ENCODE measurements at regions of chr15 and their contacts with region 1.

Region 1: DNA sequence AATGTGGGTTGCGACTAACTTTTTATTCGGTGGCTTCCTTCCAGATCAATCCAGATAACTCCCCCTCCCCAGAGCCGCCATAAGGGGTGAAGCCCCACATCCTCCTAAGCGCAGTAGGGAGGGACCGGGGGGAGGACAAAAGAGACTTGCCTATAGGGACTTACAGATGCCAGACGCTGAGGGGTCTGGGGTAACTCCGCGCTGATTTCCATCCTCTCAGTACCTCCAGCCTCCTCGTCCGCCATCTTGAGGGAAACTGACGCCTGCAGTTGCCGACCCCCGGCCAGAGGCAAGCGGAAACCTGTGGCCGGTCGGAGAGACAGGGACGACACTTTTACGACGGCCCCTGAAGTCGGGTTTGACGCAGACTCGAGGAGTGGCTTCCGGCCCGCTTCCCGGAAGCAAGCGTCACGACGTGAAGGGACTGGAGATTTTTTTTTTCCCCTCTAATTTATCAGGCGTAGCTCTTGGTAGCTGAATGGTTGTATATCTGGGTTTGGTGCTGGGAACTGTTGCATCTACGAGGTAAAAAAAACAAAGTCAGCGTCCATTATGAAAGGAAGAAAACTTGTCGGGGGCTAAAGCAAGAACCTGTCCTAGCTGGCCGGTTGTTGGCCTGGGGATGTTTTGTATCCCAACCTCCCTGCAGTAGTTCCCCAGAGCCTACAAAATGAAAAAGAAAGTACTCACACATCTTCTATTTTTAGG is at the start of gene UBR1:
- DNase-seq: peak; percentile 78
- ATAC-seq: peak; percentile 94
- H3K4me3 Mint-ChIP-seq: peak within 1 kb of the TSS; percentile 98
- H3K27ac Mint-ChIP-seq: peak within 1 kb of the TSS; percentile 98
- H3K4me1 Mint-ChIP-seq: peaks cover 46% of the 10 kb centered on the region
- H3K27me3 Mint-ChIP-seq: no peaks in the 10 kb centered on the region
- CTCF ChIP-seq: no peak
- total RNA-seq, gene UBR1: 46.6 and 48.9 TPM in 2 replicates

Region 2: DNA sequence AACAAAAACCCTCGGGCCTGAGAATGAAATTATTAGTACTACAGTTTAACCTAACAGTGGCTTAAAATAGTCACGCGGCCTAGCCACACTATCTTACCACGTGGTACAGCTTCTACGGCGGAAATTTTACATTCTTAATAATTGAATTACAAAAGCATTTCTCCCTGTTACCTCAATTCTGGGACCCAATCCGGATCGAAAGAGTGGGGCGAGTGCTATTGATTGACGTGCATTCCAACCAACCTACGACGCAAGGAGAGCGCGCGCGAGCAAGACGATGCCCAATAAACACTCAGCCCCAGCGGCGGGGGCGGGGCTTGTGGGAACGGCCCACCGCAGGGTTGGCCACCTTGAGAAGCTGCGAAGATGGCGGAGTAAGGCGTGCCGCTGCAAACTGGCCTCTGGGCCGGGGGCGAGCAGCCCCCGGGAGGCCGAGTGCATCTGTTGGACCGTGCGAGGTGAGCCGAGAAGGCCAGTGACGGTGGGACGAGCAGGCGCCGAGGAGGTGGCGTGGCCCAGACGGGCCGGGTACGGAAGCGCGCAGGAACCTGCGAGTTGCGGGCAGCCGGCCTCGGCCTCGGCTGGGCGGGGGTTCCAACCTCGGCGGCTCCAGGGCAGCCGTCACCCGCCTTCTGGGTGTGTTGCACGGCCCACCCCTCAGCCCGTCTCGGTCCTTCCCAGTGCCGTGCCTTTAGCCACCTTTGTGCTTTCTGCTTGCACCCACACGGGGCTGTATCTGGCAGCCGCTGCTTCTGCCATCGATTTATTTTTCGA is 1822.1 kb before region 1 on chr15:
- CTCF ChIA-PET with region 1: no interaction called
- POLR2A ChIA-PET with region 1: no interaction called
- intact Hi-C with region 1: loop called (anchors 5 kb)
- DNase-seq: peak; percentile 94
- ATAC-seq: peak; percentile 98
- H3K4me3 Mint-ChIP-seq: peak overlapping the region; percentile 93
- H3K27ac Mint-ChIP-seq: peak overlapping the region; percentile 94
- H3K4me1 Mint-ChIP-seq: peaks cover 42% of the 10 kb centered on the region
- H3K27me3 Mint-ChIP-seq: no peaks in the 10 kb centered on the region
- CTCF ChIP-seq: no peak

Region 3: DNA sequence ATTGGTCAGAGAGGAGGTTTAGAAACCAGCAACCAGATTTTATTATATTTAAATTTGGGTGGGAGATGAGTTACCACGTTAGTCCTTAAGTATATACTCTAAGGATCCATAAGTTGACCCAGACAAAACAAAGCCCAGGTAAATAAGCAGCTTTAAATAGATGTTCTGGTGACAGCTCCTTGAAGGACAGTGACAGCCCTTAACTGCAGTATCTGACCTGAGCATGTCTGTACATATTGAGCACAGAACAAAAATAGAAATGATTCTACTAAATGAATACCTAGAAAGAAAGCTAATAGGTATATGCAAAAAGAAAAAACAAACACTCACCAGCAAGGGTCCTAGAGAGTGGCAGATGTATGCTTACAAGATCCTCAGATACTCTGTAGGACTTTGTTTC is 63.0 kb before region 1 on chr15:
- CTCF ChIA-PET with region 1: no interaction called
- POLR2A ChIA-PET with region 1: no interaction called
- intact Hi-C with region 1: no loop called
- DNase-seq: no peak
- ATAC-seq: no peak
- H3K4me3 Mint-ChIP-seq: no peak overlapping the region
- H3K27ac Mint-ChIP-seq: no peak overlapping the region
- H3K4me1 Mint-ChIP-seq: peaks cover 2% of the 10 kb centered on the region
- H3K27me3 Mint-ChIP-seq: no peaks in the 10 kb centered on the region
- CTCF ChIP-seq: no peak

Region 4: DNA sequence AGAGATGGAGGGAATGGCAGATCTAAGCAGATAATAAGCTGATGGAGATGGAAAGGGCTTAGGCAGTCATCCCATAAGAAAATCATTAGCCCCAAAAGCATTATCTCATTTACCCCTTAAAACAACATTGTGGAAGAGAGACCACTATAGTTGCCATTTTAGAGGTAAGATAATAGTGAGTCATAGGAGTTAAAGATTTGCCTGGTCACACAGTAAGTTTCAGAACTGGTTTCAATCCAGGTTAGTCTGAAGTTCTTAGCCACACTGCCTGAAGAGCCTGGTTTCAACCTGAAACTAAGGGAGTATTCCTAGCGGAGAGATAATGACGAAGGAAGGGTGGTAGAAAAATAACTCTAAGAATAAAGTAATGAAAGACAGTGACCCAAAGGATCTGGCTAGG is 12.9 kb after region 1 on chr15:
- CTCF ChIA-PET with region 1: interaction called, 5 read pairs
- POLR2A ChIA-PET with region 1: interaction called, 12 read pairs
- intact Hi-C with region 1: loop called (anchors 1 kb)
- DNase-seq: no peak
- ATAC-seq: peak; percentile 42
- H3K4me3 Mint-ChIP-seq: peak overlapping the region; percentile 7
- H3K27ac Mint-ChIP-seq: peak overlapping the region; percentile 92
- H3K4me1 Mint-ChIP-seq: peaks cover 39% of the 10 kb centered on the region
- H3K27me3 Mint-ChIP-seq: no peaks in the 10 kb centered on the region
- CTCF ChIP-seq: no peak

Region 5: DNA sequence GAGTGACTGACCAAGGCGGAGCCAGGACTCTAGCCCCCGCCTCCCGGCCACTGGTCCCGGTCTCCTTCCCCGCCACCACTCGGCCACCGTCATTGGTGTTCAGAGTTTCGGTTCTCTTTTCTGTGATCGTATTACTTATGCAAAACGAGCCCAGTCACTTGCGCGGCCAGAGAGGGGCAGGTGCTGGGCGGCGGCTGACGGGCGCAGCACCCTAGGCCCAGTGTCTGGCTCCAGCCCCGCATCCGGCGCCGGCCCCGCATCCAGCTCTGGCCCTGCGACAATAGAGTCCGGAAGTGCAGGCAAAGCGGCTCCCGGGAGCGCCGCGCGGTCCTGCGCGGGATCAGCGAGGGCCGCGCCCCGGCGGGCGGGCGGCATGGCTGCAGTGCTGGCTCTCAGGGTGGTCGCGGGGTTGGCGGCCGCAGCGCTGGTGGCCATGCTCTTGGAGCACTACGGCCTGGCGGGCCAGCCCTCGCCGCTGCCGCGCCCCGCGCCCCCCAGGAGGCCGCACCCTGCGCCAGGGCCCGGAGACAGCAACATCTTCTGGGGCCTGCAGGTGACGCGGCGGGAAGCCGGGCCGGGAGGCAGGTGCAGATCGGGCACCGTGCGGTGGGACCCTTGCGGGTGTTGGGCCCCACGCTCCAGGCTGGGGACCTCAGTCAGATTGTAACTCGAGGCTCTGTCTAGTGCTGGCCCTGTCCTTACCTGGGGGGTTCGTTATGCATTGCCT is 27.7 kb after region 1 on chr15 and contains the start of gene TMEM62:
- CTCF ChIA-PET with region 1: no interaction called
- POLR2A ChIA-PET with region 1: interaction called, 24 read pairs
- intact Hi-C with region 1: loop called (anchors 1 kb)
- DNase-seq: peak; percentile 74
- ATAC-seq: peak; percentile 92
- H3K4me3 Mint-ChIP-seq: peak within 1 kb of the TSS; percentile 89
- H3K27ac Mint-ChIP-seq: peak within 1 kb of the TSS; percentile 86
- H3K4me1 Mint-ChIP-seq: peaks cover 31% of the 10 kb centered on the region
- H3K27me3 Mint-ChIP-seq: no peaks in the 10 kb centered on the region
- CTCF ChIP-seq: no peak
- total RNA-seq, gene TMEM62: 38.3 and 52.2 TPM in 2 replicates

Region 6: DNA sequence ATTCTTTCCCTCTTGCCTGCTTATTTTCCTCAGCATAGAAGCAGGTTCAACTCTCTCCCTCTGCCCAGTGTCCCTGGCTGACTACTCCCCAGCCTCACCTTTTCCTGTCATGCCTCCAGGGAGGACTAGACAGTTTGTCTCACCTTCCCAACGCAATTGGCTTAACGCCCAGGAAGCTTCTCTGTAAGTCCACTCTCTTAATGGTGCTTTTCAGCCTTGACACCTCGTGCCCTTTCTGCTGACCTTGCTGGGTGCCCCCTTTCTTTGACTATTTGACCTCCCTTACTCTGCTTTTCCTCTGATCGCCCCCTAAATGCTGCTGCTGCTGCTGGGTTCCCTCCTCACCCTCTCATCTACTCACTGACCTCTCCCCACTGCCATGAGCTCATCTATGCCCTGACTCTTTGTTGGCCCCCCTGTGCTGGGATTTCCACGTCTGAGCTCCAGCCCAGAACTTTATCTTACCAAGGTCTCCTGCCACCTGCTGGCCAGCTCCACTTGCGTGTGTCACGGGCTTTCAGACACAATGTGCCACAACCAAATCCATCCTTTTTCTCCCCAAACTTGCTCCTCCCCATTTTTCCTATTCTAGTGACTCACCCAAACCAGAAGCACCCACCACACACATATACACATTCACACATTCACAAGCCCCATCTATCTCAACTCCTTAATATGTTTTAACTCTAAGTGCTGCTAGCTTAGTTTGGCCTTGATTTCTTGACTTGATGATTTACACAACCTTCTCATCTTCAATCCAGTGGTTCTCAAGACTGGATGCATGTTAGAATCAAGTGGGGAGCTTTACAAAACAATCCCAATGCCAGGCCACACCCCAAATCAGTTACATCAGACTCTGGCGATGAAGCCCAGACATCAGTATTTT is 98.3 kb after region 1 on chr15:
- CTCF ChIA-PET with region 1: no interaction called
- POLR2A ChIA-PET with region 1: no interaction called
- intact Hi-C with region 1: no loop called
- DNase-seq: peak; percentile 28
- ATAC-seq: peak; percentile 56
- H3K4me3 Mint-ChIP-seq: no peak overlapping the region
- H3K27ac Mint-ChIP-seq: no peak overlapping the region
- H3K4me1 Mint-ChIP-seq: peaks cover 6% of the 10 kb centered on the region
- H3K27me3 Mint-ChIP-seq: peaks cover 8% of the 10 kb centered on the region
- CTCF ChIP-seq: peak; percentile 29

Measured in activated B cell treated with CpG ODN at 0.5 μM for 24 hours (primary cell).